Activated naive CD4-positive, alpha-beta T cell treated with anti-CD3 and anti-CD28 coated beads, Interleukin-2, amount 10 ng/mL, durations not matched to agents 7 days and 5 days (primary cell): ENCODE measurements at regions of chr3 and their contacts with region 1.

Region 1: GRCh38 chr3:105518806-105519418 is 152.2 kb downstream of the ALCAM start:
- DNase-seq: peak; percentile 25
- H3K4me3 Mint-ChIP-seq: no peak overlapping the region
- H3K27ac Mint-ChIP-seq: no peak overlapping the region
- H3K4me1 Mint-ChIP-seq: no peaks in the 10 kb centered on the region
- H3K27me3 Mint-ChIP-seq: no peaks in the 10 kb centered on the region

Region 2: GRCh38 chr3:106609666-106610301 is 1090.9 kb after region 1 on chr3:
- CTCF ChIA-PET with region 1: interaction called, 10 read pairs
- DNase-seq: peak; percentile 76
- H3K4me3 Mint-ChIP-seq: no peak overlapping the region
- H3K27ac Mint-ChIP-seq: no peak overlapping the region
- H3K4me1 Mint-ChIP-seq: peaks cover 12% of the 10 kb centered on the region
- H3K27me3 Mint-ChIP-seq: no peaks in the 10 kb centered on the region